Naive thymus-derived CD8-positive, alpha-beta T cell (primary cell): ENCODE measurements at regions of chr1 and their contacts with region 1.

Region 1: GRCh38 chr1:225999227-225999911 is at the start of gene SDE2:
- DNase-seq: peak; percentile 98 to 100 (median 100)
- ATAC-seq: peak; percentile 66 to 73
- H3K4me3 Mint-ChIP-seq: peak within 1 kb of the TSS; percentile 88 to 100 (median 100)
- H3K27ac Mint-ChIP-seq: peak within 1 kb of the TSS; percentile 97 to 100 (median 100)
- H3K4me1 Mint-ChIP-seq: peaks cover 41 to 89% (median 78%) of the 10 kb centered on the region in 4 donors
- H3K27me3 Mint-ChIP-seq: peaks cover 0 to 3% (median 0%) of the 10 kb centered on the region in 5 donors
- polyA plus RNA-seq, gene SDE2: 5.1 to 12.0 (median 7.2) TPM

Region 2: GRCh38 chr1:225428068-225428880 is 571.1 kb before region 1 on chr1:
- POLR2A ChIA-PET with region 1: interaction called, 23 read pairs
- DNase-seq: peak; percentile 87 to 94 (median 90)
- ATAC-seq: peak; percentile 86 to 89
- H3K4me3 Mint-ChIP-seq: peak overlapping the region; percentile 86 to 94 (median 90)
- H3K27ac Mint-ChIP-seq: peak overlapping the region; percentile 28 to 96 (median 93)
- H3K4me1 Mint-ChIP-seq: peaks cover 28 to 45% (median 39%) of the 10 kb centered on the region in 4 donors
- H3K27me3 Mint-ChIP-seq: no peaks in the 10 kb centered on the region

Region 3: GRCh38 chr1:225467193-225468020 is 532.0 kb before region 1 on chr1:
- POLR2A ChIA-PET with region 1: interaction called, 33 read pairs
- DNase-seq: peak; percentile 58 to 90 (median 82)
- ATAC-seq: peak; percentile 85 to 86
- H3K4me3 Mint-ChIP-seq: peak overlapping the region; percentile 89 to 97 (median 92)
- H3K27ac Mint-ChIP-seq: peak overlapping the region; percentile 92 to 99 (median 98)
- H3K4me1 Mint-ChIP-seq: peaks cover 19 to 56% (median 50%) of the 10 kb centered on the region in 4 donors
- H3K27me3 Mint-ChIP-seq: no peaks in the 10 kb centered on the region

Region 4: DNA sequence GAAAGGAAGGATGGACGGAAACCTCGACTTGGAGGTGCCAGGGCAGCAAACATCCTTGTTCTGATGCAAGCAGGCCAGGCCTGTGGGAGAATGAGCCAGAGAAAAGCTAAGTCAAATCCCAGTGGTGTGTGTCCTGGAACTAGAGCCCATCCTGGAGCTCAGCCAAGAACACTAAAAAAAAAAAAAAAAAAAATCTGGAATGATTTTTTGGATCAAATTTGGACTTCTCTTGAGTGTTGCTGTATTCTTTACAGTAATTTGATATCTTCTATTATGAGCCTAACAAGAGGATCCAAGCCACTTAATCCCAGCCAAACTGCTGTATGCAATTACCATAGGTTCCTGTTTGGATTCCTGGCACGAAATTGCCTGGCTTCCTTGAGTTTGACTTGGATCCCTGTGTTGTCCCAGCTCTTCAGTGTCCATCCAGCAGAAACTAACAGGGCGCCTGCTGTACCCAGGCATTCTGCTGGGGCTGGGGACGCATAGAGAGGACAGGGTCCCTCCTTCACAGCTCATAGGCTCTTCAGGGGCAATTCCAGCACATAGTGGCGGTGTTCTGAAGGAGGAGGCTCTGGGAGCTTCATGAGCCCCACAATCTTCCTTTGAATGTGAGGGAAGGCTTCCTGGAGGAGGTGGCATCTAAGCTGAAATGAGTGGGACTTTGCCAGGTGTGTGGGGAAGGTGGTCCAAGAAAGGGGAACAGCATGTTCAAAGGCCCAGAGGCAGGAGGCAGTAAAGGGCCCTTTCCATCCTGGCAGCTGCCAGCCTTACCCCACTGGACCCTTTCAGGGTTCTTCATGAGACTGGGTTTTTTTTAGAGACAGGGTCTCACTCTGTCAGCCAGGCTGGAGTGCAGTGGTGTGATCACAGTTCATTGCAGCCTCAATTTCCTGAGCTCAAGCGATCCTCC is 164.7 kb before region 1 on chr1:
- POLR2A ChIA-PET with region 1: no interaction called
- DNase-seq: peak in 1 of 10 donors; percentile 15
- ATAC-seq: no peak
- H3K4me3 Mint-ChIP-seq: no peak overlapping the region
- H3K27ac Mint-ChIP-seq: peak overlapping the region in 2 of 10 donors; percentile 22 to 70
- H3K4me1 Mint-ChIP-seq: peaks cover 3 to 24% (median 4%) of the 10 kb centered on the region in 4 donors
- H3K27me3 Mint-ChIP-seq: no peaks in the 10 kb centered on the region

Region 5: GRCh38 chr1:225881969-225882693 is 117.2 kb before region 1 on chr1 and contains the start of gene TMEM63A:
- POLR2A ChIA-PET with region 1: interaction called, 23 read pairs
- DNase-seq: peak; percentile 83 to 95 (median 88)
- ATAC-seq: peak; percentile 71 to 76
- H3K4me3 Mint-ChIP-seq: peak within 1 kb of the TSS; percentile 87 to 99 (median 94)
- H3K27ac Mint-ChIP-seq: peak within 1 kb of the TSS; percentile 87 to 98 (median 94)
- H3K4me1 Mint-ChIP-seq: peaks cover 28 to 55% (median 49%) of the 10 kb centered on the region in 4 donors
- H3K27me3 Mint-ChIP-seq: no peaks in the 10 kb centered on the region
- polyA plus RNA-seq, gene TMEM63A: 34.4 to 53.5 (median 45.1) TPM

Region 6: DNA sequence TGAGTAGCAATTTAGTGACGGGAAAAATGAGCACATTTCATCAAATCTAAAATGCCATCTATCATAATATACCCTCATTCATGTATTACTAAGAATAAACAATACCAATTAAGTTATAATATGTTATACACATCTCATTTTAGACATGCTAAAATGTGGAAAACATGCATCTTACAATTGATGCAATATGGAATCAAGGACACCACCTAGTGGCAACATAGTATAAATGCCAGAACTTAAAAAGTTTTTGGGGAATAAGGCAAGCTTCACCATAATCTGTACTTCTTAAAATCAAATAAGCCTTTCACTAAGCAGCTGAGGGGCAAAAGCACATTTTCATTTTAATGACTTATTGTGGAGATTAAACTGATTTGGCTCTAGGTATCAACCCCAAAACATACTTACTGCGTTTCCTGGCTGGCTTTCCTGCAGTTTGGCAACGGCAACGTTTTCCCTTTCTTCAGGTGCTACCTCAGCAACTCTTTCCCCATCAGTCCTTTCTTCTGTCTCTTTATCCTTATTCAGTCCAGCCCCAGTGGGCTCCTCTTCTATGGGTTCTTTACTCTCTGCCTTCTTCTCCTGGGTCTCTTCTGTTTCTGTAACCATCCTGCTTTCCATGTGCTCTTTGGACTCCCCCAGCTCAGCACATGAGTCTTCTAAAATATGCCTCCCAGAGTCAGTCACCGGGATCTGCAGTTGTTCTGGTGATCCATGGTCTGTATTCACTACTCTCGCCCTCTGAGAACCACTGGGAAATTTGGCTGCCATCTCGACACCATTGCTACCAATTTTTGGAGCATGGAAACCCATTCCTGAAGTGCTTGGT is 11.7 kb before region 1 on chr1:
- POLR2A ChIA-PET with region 1: interaction called, 12 read pairs
- DNase-seq: peak in 3 of 10 donors; percentile 53 to 56 (median 56)
- ATAC-seq: peak; percentile 53 to 59
- H3K4me3 Mint-ChIP-seq: no peak overlapping the region
- H3K27ac Mint-ChIP-seq: peak overlapping the region in 6 of 10 donors; percentile 22 to 77 (median 58)
- H3K4me1 Mint-ChIP-seq: peaks cover 4 to 34% (median 19%) of the 10 kb centered on the region in 4 donors
- H3K27me3 Mint-ChIP-seq: no peaks in the 10 kb centered on the region

Region 7: GRCh38 chr1:226109829-226110248 is 110.5 kb after region 1 on chr1:
- POLR2A ChIA-PET with region 1: interaction called, 21 read pairs
- DNase-seq: peak; percentile 41 to 86 (median 74)
- ATAC-seq: peak; percentile 81 to 82
- H3K4me3 Mint-ChIP-seq: peak overlapping the region; percentile 87 to 96 (median 92)
- H3K27ac Mint-ChIP-seq: peak overlapping the region; percentile 79 to 96 (median 90)
- H3K4me1 Mint-ChIP-seq: peaks cover 15 to 34% (median 25%) of the 10 kb centered on the region in 4 donors
- H3K27me3 Mint-ChIP-seq: no peaks in the 10 kb centered on the region